Uterus (tissue), 4 donors: ENCODE measurements at regions of chr2 and their contacts with region 1.

Region 1: DNA sequence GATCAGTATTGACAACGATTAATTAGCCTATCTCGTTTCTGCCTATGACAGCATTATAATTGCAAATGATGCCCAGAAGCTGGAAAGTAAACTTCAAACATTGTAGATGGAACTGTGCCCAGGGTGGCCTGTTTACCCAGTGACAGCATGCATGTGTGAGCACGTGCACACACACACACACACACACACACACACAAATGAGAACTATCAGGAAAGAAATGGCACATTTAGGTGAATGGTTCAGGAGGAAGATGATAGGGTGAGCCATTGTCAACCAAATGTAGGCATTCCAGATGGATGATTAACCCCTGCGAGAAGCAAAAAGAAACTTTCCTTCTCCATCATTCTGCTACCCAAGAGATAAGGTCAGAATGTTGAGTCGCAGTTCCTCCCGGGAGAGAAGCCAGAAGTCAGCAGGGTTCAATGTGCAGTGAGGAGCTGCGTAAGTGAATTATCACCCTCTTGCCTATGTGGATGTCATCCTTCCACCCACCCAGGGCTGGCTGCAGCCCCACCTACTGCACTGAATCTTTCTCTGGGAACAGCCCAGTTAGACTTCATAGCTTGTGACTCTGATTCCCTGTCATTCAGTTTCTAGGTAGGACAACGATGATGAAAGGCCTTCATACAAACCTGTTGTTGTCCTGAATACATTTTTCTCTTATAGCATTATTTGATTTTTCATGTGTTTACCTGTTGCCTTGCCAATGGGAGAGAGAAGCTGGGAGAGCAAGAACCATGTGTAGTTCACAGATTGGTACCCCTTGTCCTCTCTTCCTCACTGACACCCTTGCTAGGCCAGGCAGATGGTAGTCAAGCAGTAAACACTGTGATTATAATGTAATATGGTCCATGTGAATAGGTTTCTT is 3.5 kb upstream of the APOB start:
- DNase-seq: no peak
- H3K4me3 ChIP-seq: no peak overlapping the region
- H3K27ac ChIP-seq: no peak overlapping the region
- H3K4me1 ChIP-seq: no peaks in the 10 kb centered on the region
- H3K27me3 ChIP-seq: no peaks in the 10 kb centered on the region
- CTCF ChIP-seq: no peak
- POLR2A ChIP-seq: no peak

Region 2: DNA sequence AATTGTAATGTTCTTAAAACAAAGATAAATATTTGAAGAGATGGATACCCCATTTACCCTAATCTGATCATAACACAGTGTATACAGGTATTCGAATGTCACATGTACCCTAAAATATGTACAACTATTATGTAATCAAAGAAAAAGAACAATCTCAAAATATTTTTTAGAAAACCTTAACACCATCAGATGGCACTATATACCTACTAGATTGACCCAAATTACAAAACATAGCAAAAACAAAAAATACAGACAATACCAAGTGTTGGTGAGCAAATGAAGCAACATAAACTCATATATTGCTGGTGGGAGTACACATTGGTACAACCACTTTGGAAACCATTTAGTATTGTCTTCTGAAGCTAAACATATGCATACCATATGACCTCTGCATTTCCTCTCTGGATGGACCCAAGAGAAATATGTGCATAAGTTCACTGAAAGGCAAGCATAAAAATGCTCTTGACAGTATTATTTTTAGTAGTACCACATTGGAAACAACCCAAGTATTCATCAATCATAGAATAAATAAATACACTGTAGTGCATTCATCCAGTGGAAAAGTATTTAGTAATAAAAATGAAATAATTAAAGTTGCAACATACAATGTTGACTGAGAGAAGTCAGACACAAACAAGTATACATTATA is 324.7 kb before region 1 on chr2:
- intact Hi-C with region 1: no loop called
- DNase-seq: no peak
- H3K4me3 ChIP-seq: no peak overlapping the region
- H3K27ac ChIP-seq: no peak overlapping the region
- H3K4me1 ChIP-seq: no peaks in the 10 kb centered on the region
- H3K27me3 ChIP-seq: no peaks in the 10 kb centered on the region
- CTCF ChIP-seq: no peak
- POLR2A ChIP-seq: no peak

Region 3: DNA sequence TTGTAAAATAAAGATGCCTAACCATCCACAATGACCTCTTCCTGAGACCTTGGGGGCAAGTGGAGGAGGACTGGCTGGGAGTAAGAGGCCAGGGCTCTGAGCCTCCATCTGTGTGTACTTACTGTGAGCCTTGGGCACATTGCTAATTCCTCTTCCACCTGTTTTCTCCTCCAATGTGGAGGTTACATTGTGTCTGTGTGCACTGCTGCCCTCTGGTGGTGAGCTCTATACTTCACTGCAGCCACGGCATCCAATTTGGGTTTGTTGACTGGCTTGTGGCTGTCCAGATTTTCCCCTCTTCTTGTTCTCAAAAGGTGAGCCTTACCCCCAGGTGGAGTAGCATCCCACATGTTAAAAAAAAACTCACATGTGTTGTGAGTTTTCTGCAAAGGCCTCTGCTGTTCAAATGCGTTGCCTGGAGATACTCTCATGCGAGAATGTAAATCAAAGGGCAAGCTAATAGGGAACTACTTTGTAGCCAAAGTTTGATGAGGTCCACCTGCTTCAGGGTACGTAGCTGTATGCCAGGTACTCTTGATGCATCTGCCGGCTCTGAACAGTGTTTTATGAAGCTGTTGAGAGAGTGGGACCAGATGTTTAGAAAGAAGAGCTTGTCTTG is 84.3 kb before region 1 on chr2:
- intact Hi-C with region 1: no loop called
- DNase-seq: peak; percentile 71 to 73
- H3K4me3 ChIP-seq: no peak overlapping the region
- H3K27ac ChIP-seq: no peak overlapping the region
- H3K4me1 ChIP-seq: no peaks in the 10 kb centered on the region
- H3K27me3 ChIP-seq: no peaks in the 10 kb centered on the region
- CTCF ChIP-seq: peak; percentile 77 to 88 (median 84)
- POLR2A ChIP-seq: no peak

Region 4: GRCh38 chr2:21317131-21317530 is 269.8 kb after region 1 on chr2:
- intact Hi-C with region 1: loop called (anchors 5 kb)
- DNase-seq: peak; percentile 31 to 43
- H3K4me3 ChIP-seq: no peak overlapping the region
- H3K27ac ChIP-seq: no peak overlapping the region
- H3K4me1 ChIP-seq: no peaks in the 10 kb centered on the region
- H3K27me3 ChIP-seq: no peaks in the 10 kb centered on the region
- CTCF ChIP-seq: peak; percentile 52 to 68 (median 56)
- POLR2A ChIP-seq: no peak